Keratinocyte (primary cell): ENCODE measurements at regions of chr17 and their contacts with region 1.

Region 1: DNA sequence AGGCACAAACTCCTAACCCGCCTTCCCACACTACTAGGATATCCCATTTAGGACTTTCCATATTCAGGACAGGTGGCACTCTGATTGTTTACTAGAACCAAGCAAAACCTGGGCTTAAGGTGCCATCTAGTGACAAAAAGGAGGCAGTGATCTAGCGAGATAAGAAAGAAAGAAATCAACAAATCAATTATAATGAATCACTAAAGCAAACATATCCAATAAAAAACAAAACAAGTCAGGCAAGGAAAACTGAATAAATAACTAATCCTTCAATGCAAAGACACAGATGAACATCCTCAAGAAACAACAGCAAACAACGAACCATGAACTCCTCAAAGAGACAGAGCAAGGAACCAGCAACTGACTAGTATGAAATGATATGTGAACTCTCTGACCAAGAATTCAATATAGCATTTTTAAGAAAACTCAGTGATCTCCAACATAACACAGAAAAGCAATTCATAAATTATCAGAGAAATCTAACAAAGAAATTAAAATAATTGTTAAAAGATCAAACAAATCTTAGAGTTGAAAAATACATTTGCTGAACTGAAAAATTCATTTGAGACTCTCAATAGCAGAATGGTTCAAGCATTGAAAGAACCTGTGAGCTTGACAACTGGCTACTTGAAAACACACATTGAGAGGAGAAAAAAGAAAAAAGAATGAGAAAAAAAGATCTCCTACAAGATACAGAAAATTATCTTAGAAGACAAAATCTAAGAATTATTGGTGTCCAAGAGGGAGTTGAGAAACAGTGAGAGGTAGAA is 203.7 kb downstream of the CEP112 start:
- DNase-seq: no peak
- H3K4me3 ChIP-seq: no peak overlapping the region
- H3K27ac ChIP-seq: no peak overlapping the region
- H3K4me1 ChIP-seq: no peaks in the 10 kb centered on the region
- H3K27me3 ChIP-seq: no peaks in the 10 kb centered on the region
- CTCF ChIP-seq: peak; percentile 44 to 67 (median 54)

Region 2: DNA sequence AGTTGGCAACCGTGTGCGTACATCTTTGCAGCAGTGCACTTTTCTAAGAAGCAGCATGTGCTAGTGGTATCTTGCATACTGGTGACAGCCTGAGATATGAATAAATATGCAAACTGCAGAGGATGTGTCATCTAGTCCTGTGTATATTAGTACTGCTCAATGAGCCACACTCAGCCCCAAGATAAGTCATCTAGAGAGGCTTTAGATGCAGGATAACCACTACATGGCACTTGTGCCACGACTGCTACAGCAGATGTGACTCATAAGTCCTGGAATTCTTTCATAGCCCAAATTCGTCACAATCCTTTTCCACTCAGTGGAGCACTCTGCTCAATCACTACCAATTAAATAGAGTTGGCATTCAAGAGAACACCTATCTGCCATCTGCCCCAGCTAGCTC is 598.3 kb before region 1 on chr17:
- dilution Hi-C with region 1: loop called (anchors 10 kb)
- DNase-seq: no peak
- H3K4me3 ChIP-seq: no peak overlapping the region
- H3K27ac ChIP-seq: no peak overlapping the region
- H3K4me1 ChIP-seq: no peaks in the 10 kb centered on the region
- H3K27me3 ChIP-seq: no peaks in the 10 kb centered on the region
- CTCF ChIP-seq: no peak